ENCODE measurements at regions of chr15 and their contacts with region 1.

Region 1: GRCh38 chr15:75625542-75626347 is at the start of gene SNUPN:
- DNase-seq: peak; percentile 88 to 94 (median 89)
- H3K4me3 ChIP-seq: peak within 1 kb of the TSS; percentile 94 to 99
- H3K4me3 Mint-ChIP-seq: peak within 1 kb of the TSS; percentile 91 to 97 (median 94)
- H3K27ac ChIP-seq: peak within 1 kb of the TSS; percentile 97
- H3K27ac Mint-ChIP-seq: peak within 1 kb of the TSS; percentile 96 to 99 (median 98)
- H3K4me1 ChIP-seq: peaks cover 22% of the 10 kb centered on the region
- H3K4me1 Mint-ChIP-seq: peaks cover 14 to 35% (median 24%) of the 10 kb centered on the region in 4 donors
- H3K27me3 ChIP-seq: no peaks in the 10 kb centered on the region
- H3K27me3 Mint-ChIP-seq: no peaks in the 10 kb centered on the region
- total RNA-seq, gene SNUPN: 21.0 to 23.5 TPM

Region 2: DNA sequence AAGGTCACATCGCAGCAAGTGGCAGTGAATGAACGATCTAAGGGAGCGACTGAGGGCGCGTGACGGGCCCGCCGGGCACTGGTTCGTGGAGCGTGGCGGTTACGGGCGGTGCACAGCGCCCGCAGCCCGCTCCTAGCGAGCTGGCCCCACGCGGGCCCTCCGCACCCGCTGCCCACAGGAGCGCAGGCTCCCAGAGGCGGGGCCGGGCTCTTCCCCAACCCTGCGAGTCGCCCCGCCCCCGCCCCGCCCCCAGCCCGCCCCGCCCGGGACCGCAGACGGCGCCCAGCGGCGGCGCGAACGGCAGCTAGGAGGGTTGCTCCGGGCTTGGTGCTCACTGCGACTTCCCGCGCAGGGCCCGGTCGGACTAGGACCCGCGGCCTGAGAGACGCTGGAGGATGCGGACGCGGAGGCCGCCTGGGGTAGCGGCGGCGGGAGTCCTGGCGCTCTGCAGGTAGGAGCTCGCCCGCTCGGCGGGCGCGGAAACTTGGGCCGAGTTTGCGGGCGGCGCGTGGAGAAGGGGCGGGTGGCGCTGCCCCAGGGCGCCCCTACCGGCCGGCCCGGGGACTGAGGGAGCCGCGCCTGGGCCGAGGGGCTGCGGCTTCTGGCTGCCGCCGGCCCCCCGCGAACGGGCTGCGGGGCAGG is 424.0 kb before region 1 on chr15 and contains the start of gene C15orf39:
- CTCF ChIA-PET with region 1: no interaction called
- POLR2A ChIA-PET with region 1: no interaction called
- intact Hi-C with region 1: loop called (anchors 5 kb)
- DNase-seq: peak; percentile 71 to 87 (median 83)
- H3K4me3 ChIP-seq: peak within 1 kb of the TSS; percentile 65 to 70
- H3K4me3 Mint-ChIP-seq: peak within 1 kb of the TSS; percentile 89 to 97 (median 94)
- H3K27ac ChIP-seq: peak within 1 kb of the TSS; percentile 69
- H3K27ac Mint-ChIP-seq: peak within 1 kb of the TSS; percentile 90 to 96 (median 93)
- H3K4me1 ChIP-seq: peaks cover 40% of the 10 kb centered on the region
- H3K4me1 Mint-ChIP-seq: peaks cover 16 to 58% (median 30%) of the 10 kb centered on the region in 4 donors
- H3K27me3 ChIP-seq: no peaks in the 10 kb centered on the region
- H3K27me3 Mint-ChIP-seq: no peaks in the 10 kb centered on the region
- total RNA-seq, gene C15orf39: 25.9 to 27.0 TPM

Region 3: DNA sequence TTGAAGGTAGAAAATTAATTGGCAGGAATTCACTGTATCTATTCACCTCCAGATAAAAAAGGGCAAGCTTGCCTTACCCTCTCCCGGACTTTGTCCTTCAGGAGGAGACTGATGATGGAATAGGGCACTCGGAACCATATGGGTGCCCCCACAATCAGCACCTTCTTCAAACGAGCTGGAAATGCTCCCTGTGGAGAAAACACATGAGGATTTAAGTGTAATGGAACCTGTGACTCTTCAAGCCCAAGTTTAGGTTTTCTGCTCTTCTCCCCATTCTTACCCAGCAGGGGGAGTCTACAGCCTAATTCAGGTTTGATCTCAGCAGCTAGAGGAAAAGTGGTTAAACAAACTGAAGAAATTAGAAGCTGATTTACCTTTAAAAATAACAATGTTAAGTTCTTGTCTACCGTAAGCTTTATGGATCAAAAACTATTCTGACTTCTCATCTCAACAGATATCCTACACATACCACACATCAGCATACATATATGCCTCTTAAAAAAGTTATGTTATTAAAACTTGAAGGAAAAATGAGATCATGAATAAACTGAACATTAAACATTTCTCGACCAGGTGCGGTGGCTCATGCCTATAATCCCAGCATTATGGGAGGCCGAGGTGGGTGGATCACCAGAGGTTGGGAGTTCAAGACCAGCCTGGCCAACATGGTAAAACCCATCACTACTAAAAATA is 116.8 kb before region 1 on chr15:
- CTCF ChIA-PET with region 1: interaction called, 7 read pairs
- POLR2A ChIA-PET with region 1: interaction called, 9 read pairs
- intact Hi-C with region 1: loop called (anchors 1 kb)
- DNase-seq: peak in 4 of 5 donors; percentile 40 to 49 (median 44)
- H3K4me3 ChIP-seq: no peak overlapping the region
- H3K4me3 Mint-ChIP-seq: no peak overlapping the region
- H3K27ac ChIP-seq: no peak overlapping the region
- H3K27ac Mint-ChIP-seq: peak overlapping the region in 2 of 7 donors; percentile 50 to 78
- H3K4me1 ChIP-seq: no peaks in the 10 kb centered on the region
- H3K4me1 Mint-ChIP-seq: peaks cover 0 to 3% (median 0%) of the 10 kb centered on the region in 4 donors
- H3K27me3 ChIP-seq: no peaks in the 10 kb centered on the region
- H3K27me3 Mint-ChIP-seq: no peaks in the 10 kb centered on the region

Region 4: GRCh38 chr15:75542386-75542797 is 83.4 kb before region 1 on chr15:
- CTCF ChIA-PET with region 1: no interaction called
- POLR2A ChIA-PET with region 1: no interaction called
- intact Hi-C with region 1: no loop called
- DNase-seq: no peak
- H3K4me3 ChIP-seq: no peak overlapping the region
- H3K4me3 Mint-ChIP-seq: no peak overlapping the region
- H3K27ac ChIP-seq: no peak overlapping the region
- H3K27ac Mint-ChIP-seq: peak overlapping the region in 3 of 7 donors; percentile 5 to 13 (median 13)
- H3K4me1 ChIP-seq: peaks cover 14% of the 10 kb centered on the region
- H3K4me1 Mint-ChIP-seq: peaks cover 17 to 44% (median 28%) of the 10 kb centered on the region in 4 donors
- H3K27me3 ChIP-seq: no peaks in the 10 kb centered on the region
- H3K27me3 Mint-ChIP-seq: no peaks in the 10 kb centered on the region

Region 5: GRCh38 chr15:75578948-75579920 is 46.5 kb before region 1 on chr15 and contains the start of gene PTPN9:
- CTCF ChIA-PET with region 1: no interaction called
- POLR2A ChIA-PET with region 1: interaction called, 33 read pairs
- intact Hi-C with region 1: loop called (anchors 1 kb)
- DNase-seq: peak; percentile 52 to 73 (median 63)
- H3K4me3 ChIP-seq: peak within 1 kb of the TSS; percentile 61 to 74
- H3K4me3 Mint-ChIP-seq: peak within 1 kb of the TSS; percentile 93 to 97 (median 94)
- H3K27ac ChIP-seq: peak within 1 kb of the TSS; percentile 77
- H3K27ac Mint-ChIP-seq: peak within 1 kb of the TSS; percentile 90 to 95 (median 94)
- H3K4me1 ChIP-seq: peaks cover 22% of the 10 kb centered on the region
- H3K4me1 Mint-ChIP-seq: peaks cover 18 to 26% (median 21%) of the 10 kb centered on the region in 4 donors
- H3K27me3 ChIP-seq: no peaks in the 10 kb centered on the region
- H3K27me3 Mint-ChIP-seq: no peaks in the 10 kb centered on the region
- total RNA-seq, gene PTPN9: 15.9 to 16.6 TPM

Region 6: GRCh38 chr15:75606711-75607699 is 18.7 kb before region 1 on chr15:
- CTCF ChIA-PET with region 1: interaction called, 3 read pairs
- POLR2A ChIA-PET with region 1: interaction called, 36 read pairs
- intact Hi-C with region 1: no loop called
- DNase-seq: peak; percentile 43 to 57 (median 52)
- H3K4me3 ChIP-seq: peak overlapping the region; percentile 5 to 40
- H3K4me3 Mint-ChIP-seq: peak overlapping the region; percentile 71 to 82 (median 78)
- H3K27ac ChIP-seq: peak overlapping the region; percentile 39
- H3K27ac Mint-ChIP-seq: peak overlapping the region; percentile 78 to 94 (median 91)
- H3K4me1 ChIP-seq: peaks cover 47% of the 10 kb centered on the region
- H3K4me1 Mint-ChIP-seq: peaks cover 34 to 56% (median 46%) of the 10 kb centered on the region in 4 donors
- H3K27me3 ChIP-seq: no peaks in the 10 kb centered on the region
- H3K27me3 Mint-ChIP-seq: no peaks in the 10 kb centered on the region

Region 7: GRCh38 chr15:75647370-75648155 is 21.8 kb after region 1 on chr15 and contains the start of gene SNX33:
- CTCF ChIA-PET with region 1: interaction called, 35 read pairs
- POLR2A ChIA-PET with region 1: interaction called, 209 read pairs
- intact Hi-C with region 1: no loop called
- DNase-seq: peak; percentile 43 to 82 (median 49)
- H3K4me3 ChIP-seq: peak within 1 kb of the TSS; percentile 64 to 73
- H3K4me3 Mint-ChIP-seq: peak within 1 kb of the TSS; percentile 86 to 91 (median 89)
- H3K27ac ChIP-seq: peak within 1 kb of the TSS; percentile 45
- H3K27ac Mint-ChIP-seq: peak within 1 kb of the TSS; percentile 66 to 91 (median 86)
- H3K4me1 ChIP-seq: peaks cover 32% of the 10 kb centered on the region
- H3K4me1 Mint-ChIP-seq: peaks cover 20 to 53% (median 37%) of the 10 kb centered on the region in 4 donors
- H3K27me3 ChIP-seq: no peaks in the 10 kb centered on the region
- H3K27me3 Mint-ChIP-seq: no peaks in the 10 kb centered on the region
- total RNA-seq, gene SNX33: 3.5 to 3.8 TPM

Region 8: DNA sequence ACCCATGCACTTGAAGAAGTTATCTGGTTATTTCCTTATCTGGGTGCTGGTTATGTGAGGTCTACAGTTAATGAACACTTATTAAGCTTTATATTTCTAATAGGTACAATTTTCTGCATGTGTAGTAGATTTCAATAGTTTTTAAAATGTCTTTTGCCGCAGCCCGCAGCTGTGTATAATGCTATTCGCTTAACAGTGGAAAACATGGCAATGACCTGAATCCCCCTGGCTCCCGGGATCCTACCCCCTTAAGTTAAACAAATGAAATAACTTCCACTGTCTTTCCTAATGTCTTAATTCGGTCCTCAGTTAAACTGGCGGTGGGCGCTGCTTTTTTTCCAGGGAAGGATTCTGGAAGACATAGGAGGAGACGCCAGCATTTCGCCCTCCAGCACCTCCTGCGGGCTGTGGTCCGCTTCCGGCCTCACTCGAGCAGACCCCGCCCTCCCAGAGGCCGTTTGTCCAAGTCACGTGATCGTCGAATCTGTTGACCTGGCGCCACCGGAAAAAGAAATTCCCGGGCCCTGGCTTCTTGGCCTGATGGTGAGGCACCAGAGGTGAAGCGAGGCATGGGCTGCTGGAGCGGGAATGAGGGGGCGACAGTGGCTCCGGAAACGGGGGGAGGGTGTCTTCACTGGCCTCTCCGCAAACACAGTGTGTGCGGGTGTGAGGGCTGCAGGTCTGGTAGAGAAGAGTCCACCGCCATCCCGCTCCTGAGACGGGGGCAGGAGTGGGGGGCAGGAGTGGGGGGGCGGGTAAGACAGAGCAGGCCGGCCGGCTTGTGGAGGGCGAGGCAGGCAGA is 132.5 kb after region 1 on chr15:
- CTCF ChIA-PET with region 1: no interaction called
- POLR2A ChIA-PET with region 1: no interaction called
- intact Hi-C with region 1: no loop called
- DNase-seq: peak; percentile 27 to 67 (median 35)
- H3K4me3 ChIP-seq: peak overlapping the region; percentile 66 to 82
- H3K4me3 Mint-ChIP-seq: peak overlapping the region; percentile 79 to 92 (median 88)
- H3K27ac ChIP-seq: peak overlapping the region; percentile 36
- H3K27ac Mint-ChIP-seq: peak overlapping the region; percentile 67 to 84 (median 72)
- H3K4me1 ChIP-seq: peaks cover 8% of the 10 kb centered on the region
- H3K4me1 Mint-ChIP-seq: peaks cover 5 to 26% (median 13%) of the 10 kb centered on the region in 4 donors
- H3K27me3 ChIP-seq: no peaks in the 10 kb centered on the region
- H3K27me3 Mint-ChIP-seq: peaks cover 0 to 2% of the 10 kb centered on the region in 2 donors

Region 9: GRCh38 chr15:76038512-76038911 is 412.8 kb after region 1 on chr15:
- CTCF ChIA-PET with region 1: no interaction called
- POLR2A ChIA-PET with region 1: no interaction called
- intact Hi-C with region 1: no loop called
- DNase-seq: no peak
- H3K4me3 ChIP-seq: no peak overlapping the region
- H3K4me3 Mint-ChIP-seq: no peak overlapping the region
- H3K27ac ChIP-seq: no peak overlapping the region
- H3K27ac Mint-ChIP-seq: no peak overlapping the region
- H3K4me1 ChIP-seq: no peaks in the 10 kb centered on the region
- H3K4me1 Mint-ChIP-seq: no peaks in the 10 kb centered on the region
- H3K27me3 ChIP-seq: no peaks in the 10 kb centered on the region
- H3K27me3 Mint-ChIP-seq: peaks cover 26 to 27% of the 10 kb centered on the region in 2 donors